Naive thymus-derived CD8-positive, alpha-beta T cell (primary cell): ENCODE measurements at regions of chr17 and their contacts with region 1.

Region 1: DNA sequence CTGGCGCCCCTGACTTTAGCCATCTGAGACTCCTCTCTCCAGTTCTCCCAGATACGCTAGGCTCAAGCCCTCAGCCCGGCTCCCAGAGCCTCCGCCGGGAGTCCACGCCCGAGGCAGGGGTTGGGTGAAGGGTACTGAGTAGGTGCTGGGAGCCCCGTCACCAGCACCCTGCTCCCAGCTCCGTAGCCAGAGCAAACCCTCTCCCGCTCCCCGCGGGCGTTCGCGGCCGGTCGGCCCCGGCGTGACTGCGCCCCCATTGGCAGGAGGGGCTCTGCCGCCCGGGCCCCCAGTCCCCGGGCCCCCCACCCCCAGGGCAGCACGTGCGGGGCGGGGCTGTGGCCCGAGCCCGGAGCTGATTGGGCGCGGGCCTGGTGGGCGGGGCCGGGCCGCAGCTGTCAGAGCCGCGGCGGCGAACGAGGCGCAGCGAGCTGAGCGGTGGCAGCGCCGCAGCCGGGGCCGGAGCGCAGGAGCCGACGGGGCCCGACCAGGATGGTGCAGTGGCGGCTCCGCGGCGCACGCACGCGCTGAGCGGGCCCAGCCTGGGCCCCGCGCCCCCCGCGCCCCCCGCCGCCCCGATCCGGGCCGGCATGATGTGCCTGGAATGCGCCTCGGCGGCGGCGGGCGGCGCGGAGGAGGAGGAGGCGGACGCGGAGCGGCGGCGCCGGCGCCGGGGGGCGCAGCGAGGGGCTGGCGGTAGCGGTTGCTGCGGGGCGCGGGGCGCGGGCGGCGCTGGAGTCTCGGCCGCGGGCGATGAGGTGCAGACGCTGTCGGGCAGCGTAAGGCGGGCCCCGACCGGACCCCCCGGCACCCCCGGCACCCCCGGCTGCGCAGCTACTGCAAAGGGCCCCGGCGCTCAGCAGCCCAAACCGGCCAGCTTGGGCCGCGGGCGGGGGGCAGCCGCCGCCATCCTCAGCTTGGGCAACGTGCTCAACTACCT is at the start of gene SPNS2:
- DNase-seq: peak; percentile 40 to 73 (median 68)
- ATAC-seq: peak; percentile 91
- H3K4me3 Mint-ChIP-seq: peak within 1 kb of the TSS; percentile 80 to 93 (median 87)
- H3K27ac Mint-ChIP-seq: peak within 1 kb of the TSS in 5 of 10 donors; percentile 20 to 78 (median 73)
- H3K4me1 Mint-ChIP-seq: peaks cover 13 to 29% (median 23%) of the 10 kb centered on the region in 4 donors
- H3K27me3 Mint-ChIP-seq: peaks cover 3 to 20% (median 18%) of the 10 kb centered on the region in 5 donors
- polyA plus RNA-seq, gene SPNS2: 0.53 to 0.63 (median 0.55) TPM

Region 2: DNA sequence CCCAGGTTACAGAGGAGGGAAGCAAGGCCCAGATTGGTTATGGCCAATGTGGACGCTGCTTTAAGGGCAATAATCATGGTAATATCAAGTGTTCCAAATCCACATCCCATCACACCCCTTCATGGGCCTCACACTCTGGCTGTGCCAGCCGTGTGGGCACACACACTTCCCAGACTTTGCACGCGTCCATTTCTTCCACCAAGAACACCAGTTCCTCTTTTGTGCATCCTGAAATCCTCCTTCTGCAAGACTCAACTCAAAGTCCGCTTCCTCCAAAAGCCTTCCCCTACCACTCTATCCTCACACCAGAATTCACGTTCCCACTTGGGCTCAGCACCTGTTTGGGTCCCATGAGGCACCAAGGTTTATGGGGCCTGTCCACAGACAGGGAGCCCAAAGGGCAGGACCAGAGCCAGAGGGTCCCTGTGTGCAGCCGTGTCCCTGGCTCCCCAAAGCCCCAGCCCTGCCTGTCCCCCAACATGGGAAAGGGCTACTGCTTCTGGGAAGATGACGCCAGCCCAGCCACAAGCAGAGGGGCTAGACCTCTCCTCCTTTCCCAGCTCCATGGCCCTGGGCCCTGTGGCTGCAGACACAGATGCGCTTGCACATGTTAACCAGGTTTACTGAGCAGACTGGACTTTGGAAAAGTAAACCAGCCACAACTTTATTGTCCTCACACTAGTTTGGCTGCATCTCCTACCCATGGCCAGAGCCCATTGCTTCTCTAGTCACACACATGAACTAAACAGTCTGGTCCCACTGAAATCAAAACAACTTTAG is 44.7 kb before region 1 on chr17:
- POLR2A ChIA-PET with region 1: no interaction called
- DNase-seq: no peak
- ATAC-seq: no peak
- H3K4me3 Mint-ChIP-seq: no peak overlapping the region
- H3K27ac Mint-ChIP-seq: no peak overlapping the region
- H3K4me1 Mint-ChIP-seq: peaks cover 0 to 2% (median 0%) of the 10 kb centered on the region in 4 donors
- H3K27me3 Mint-ChIP-seq: no peaks in the 10 kb centered on the region

Region 3: GRCh38 chr17:4485654-4486646 is 12.8 kb before region 1 on chr17:
- POLR2A ChIA-PET with region 1: interaction called, 18 read pairs
- DNase-seq: peak; percentile 29 to 75 (median 54)
- ATAC-seq: peak; percentile 96 to 98
- H3K4me3 Mint-ChIP-seq: peak overlapping the region; percentile 81 to 95 (median 94)
- H3K27ac Mint-ChIP-seq: peak overlapping the region; percentile 90 to 96 (median 94)
- H3K4me1 Mint-ChIP-seq: peaks cover 22 to 63% (median 59%) of the 10 kb centered on the region in 4 donors
- H3K27me3 Mint-ChIP-seq: no peaks in the 10 kb centered on the region

Region 4: DNA sequence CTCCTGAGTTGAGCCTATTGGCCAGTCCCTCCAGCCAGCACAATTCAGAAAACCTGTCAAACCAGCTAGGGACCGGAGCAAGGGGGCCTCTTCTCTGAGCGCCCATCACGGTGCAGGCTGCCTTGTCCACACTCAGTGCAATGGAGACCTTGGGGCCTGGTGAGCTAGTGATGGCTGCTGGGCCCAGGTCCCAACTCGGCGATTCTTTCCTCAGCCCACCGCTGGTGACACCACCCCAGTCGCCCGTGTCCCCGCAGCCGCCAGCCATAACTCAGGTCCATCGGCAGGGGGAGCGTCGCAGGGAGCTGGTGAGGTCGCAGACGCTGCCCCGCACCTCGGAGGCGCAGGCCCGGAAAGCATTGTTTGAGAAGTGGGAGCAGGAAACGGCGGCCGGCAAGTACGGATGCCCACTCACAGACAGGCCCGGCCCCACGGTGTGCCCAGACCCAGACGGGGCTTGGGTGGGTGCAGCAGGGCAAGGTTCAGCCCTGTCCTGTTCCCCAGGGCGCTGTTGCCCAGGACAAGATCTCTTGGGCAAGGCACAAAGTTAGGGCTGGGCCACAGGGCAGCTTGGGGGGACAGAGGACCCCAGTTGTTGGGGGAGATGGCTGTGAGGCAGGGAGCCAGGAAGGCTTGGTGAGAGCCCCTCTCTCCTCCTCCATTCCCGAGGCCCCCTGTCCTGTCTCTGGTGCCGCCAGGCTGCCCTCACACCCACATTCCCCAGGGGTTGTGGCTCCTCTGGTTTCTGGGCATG is 96.4 kb after region 1 on chr17:
- POLR2A ChIA-PET with region 1: no interaction called
- DNase-seq: peak in 6 of 10 donors; percentile 16 to 40 (median 29)
- ATAC-seq: peak; percentile 77 to 81
- H3K4me3 Mint-ChIP-seq: peak overlapping the region in 5 of 10 donors; percentile 18 to 49 (median 25)
- H3K27ac Mint-ChIP-seq: peak overlapping the region in 2 of 10 donors; percentile 33 to 36
- H3K4me1 Mint-ChIP-seq: peaks cover 0 to 9% (median 5%) of the 10 kb centered on the region in 4 donors
- H3K27me3 Mint-ChIP-seq: peaks cover 0 to 20% (median 3%) of the 10 kb centered on the region in 5 donors